ENCODE measurements at regions of chr3 and their contacts with region 1.

Region 1: GRCh38 chr3:192212335-192212734 is 515.0 kb downstream of the FGF12 start:
- DNase-seq: no peak
- H3K4me3 ChIP-seq: no peak overlapping the region
- H3K27ac ChIP-seq: no peak overlapping the region
- H3K4me1 ChIP-seq: peaks cover 0 to 5% (median 2%) of the 10 kb centered on the region in 4 experiments; a peak in 3 of 7 replicates
- H3K27me3 ChIP-seq: no peaks in the 10 kb centered on the region
- CTCF ChIP-seq: peak in 1 of 3 experiments; percentile 16; a peak in 1 of 4 replicates
- EP300 ChIP-seq: no peak
- POLR2A ChIP-seq: no peak
- RAD21 ChIP-seq: peak in 1 of 2 experiments; percentile 13; a peak in 1 of 4 replicates

Region 2: DNA sequence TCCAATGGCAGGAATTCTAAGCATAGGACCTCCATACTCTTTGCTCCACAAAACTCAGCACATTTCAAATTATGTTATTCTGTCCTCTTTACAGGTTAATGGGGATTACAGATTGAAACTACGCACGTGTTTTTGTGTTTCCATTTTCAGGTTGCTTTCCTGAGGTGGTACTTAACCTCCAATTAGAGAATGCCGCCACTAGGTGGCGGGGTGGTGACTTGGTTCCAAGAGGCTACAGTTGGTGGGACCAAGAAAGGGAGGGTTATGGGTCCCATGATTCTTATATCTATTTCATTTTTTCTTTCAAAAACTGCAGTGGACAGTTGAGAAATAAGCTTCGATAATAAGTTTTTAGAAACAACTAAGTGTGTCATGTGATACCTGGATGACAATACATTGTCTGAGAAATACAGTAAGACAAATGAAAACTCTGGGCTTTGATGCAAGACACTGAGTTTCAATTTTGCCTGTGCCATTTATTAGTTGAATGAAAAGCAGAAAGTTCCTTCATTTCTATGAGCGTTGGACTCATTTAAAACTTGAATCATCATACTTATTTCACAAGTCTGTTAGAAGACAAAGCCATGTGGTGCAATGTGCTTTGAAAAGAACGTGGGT is 24.0 kb before region 1 on chr3:
- CTCF ChIA-PET with region 1: interaction called, 14 read pairs
- POLR2A ChIA-PET with region 1: no interaction called
- DNase-seq: peak; percentile 49 to 81
- H3K4me3 ChIP-seq: no peak overlapping the region
- H3K27ac ChIP-seq: no peak overlapping the region
- H3K4me1 ChIP-seq: peaks cover 0 to 3% (median 0%) of the 10 kb centered on the region in 4 experiments; a peak in 1 of 7 replicates
- H3K27me3 ChIP-seq: peaks cover 0 to 2% (median 0%) of the 10 kb centered on the region in 4 experiments; a peak in 1 of 7 replicates
- CTCF ChIP-seq: peak; percentile 58 to 79 (median 75)
- EP300 ChIP-seq: no peak
- POLR2A ChIP-seq: no peak
- RAD21 ChIP-seq: peak; percentile 77 to 84